GM12878 (cell line): ENCODE measurements at regions of chr7 and their contacts with region 1.

Region 1: DNA sequence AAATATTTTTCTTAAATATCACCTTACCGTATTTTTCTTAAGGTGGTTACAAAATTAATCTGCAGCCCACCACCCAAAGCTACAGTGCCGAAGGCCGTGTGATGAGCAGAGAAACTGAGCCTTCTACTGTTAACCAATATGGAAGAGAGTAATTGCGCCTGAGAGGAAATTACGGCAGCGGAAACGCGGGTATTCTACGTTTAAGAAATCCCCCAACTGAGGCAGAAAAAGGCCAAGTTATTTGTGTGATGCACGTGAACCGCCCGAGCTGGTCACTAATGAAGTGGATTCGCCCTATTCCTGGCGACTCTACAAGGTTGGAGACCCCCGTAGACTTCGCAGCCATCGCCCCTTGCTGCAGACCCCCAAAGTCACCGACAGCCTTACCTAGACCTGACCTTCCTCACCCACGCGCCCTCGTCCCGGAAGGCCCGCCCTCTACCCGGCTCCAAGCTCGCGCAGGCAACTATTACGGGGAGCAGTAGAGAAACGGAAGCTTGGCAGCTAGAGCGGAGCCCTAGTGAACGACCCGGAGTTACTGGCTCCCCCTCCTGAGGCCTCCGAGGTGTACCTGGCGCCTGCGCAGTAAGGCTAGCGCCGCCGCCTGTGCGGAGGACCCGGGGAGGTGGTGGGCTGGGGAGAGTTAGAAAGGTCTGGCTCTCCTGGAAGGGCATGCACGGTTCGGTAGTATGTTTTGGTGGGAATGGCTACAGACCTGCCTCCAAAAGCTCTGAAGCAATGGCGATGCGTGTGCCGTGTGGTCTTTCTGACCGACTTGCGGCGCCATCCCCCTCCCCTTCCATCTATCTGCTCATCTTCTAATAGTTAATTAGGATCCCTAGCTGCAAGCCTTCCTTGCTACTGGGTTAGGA is at the start of gene MRPS33:
- DNase-seq: peak; percentile 89
- ATAC-seq: peak; percentile 97
- H3K4me3 ChIP-seq: peak within 1 kb of the TSS; percentile 86
- H3K27ac ChIP-seq: peak within 1 kb of the TSS; percentile 95
- H3K4me1 ChIP-seq: peaks cover 10% of the 10 kb centered on the region
- H3K27me3 ChIP-seq: no peaks in the 10 kb centered on the region
- CTCF ChIP-seq: peak; percentile 72 to 93 (median 80)
- EP300 ChIP-seq: no peak; a peak in 1 of 4 replicates
- POLR2A ChIP-seq: peak; percentile 99
- RAD21 ChIP-seq: no peak
- polyA plus RNA-seq, gene MRPS33: 336 to 372 TPM

Region 2: DNA sequence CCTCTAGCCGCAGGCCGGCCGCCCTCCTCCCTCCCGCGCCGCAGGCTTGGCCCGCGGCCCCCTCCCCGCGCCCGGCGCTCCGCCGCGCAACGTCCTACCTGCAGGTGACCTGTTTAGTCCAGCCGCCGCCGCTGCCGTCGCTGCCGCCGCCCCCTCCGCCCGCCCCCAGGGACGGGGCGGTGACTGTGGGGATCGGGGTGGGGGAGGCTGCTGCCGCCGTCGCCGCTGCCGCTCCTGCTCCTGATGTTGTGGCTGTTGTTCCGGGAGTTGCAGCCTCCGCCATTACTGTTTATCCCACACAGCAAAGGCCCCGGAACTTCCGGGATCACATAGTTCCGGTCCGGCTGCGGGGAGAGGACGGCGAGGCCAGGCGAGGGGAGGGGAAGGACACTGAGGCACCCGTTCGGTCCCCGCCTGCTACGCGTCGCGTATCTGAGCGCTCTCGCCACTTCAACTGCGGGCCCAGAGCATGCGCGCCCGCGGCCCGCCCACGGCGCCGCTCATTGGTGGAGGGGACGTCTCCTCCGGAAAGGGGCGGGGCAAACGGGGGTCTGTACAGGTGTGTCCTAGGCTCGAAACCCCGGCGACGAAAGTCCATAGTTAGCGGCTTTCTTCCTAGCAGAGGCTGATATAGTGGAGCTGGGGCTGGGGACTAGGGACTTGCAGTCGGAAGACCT is 535.6 kb before region 1 on chr7 and contains the start of gene MKRN1:
- CTCF ChIA-PET with region 1: interaction called, 5 read pairs
- POLR2A ChIA-PET with region 1: interaction called, 3 read pairs
- RAD21 ChIA-PET with region 1: interaction called, 3 read pairs
- SMC1A ChIA-PET with region 1: interaction called, 3 read pairs
- in situ Hi-C with region 1: no loop called
- intact Hi-C with region 1: loop called (anchors 5 kb)
- DNase-seq: peak; percentile 83
- ATAC-seq: peak; percentile 96
- H3K4me3 ChIP-seq: peak within 1 kb of the TSS; percentile 98
- H3K27ac ChIP-seq: peak within 1 kb of the TSS; percentile 76
- H3K4me1 ChIP-seq: peaks cover 13% of the 10 kb centered on the region
- H3K27me3 ChIP-seq: no peaks in the 10 kb centered on the region; a peak in 1 of 4 replicates
- CTCF ChIP-seq: no peak
- EP300 ChIP-seq: no peak
- POLR2A ChIP-seq: peak; percentile 85
- RAD21 ChIP-seq: no peak
- polyA plus RNA-seq, gene MKRN1: 19.1 to 23.8 TPM

Region 3: GRCh38 chr7:140673063-140673773 is 341.5 kb before region 1 on chr7:
- CTCF ChIA-PET with region 1: interaction called, 88 read pairs
- POLR2A ChIA-PET with region 1: interaction called, 5 read pairs
- RAD21 ChIA-PET with region 1: interaction called, 23 read pairs
- SMC1A ChIA-PET with region 1: interaction called, 57 read pairs
- in situ Hi-C with region 1: loop called (anchors 10 kb)
- intact Hi-C with region 1: loop called (anchors 1 kb)
- DNase-seq: no peak
- ATAC-seq: peak; percentile 62
- H3K4me3 ChIP-seq: peak overlapping the region; percentile 82
- H3K27ac ChIP-seq: peak overlapping the region; percentile 65
- H3K4me1 ChIP-seq: peaks cover 39% of the 10 kb centered on the region
- H3K27me3 ChIP-seq: no peaks in the 10 kb centered on the region
- CTCF ChIP-seq: 0 out of 6 replicates have a peak, but pooled peaks of 1 of the 3 experiments have one; percentile 2
- EP300 ChIP-seq: no peak
- POLR2A ChIP-seq: peak; percentile 31; the same call in 1 of the 2 replicates
- RAD21 ChIP-seq: no peak

Region 4: DNA sequence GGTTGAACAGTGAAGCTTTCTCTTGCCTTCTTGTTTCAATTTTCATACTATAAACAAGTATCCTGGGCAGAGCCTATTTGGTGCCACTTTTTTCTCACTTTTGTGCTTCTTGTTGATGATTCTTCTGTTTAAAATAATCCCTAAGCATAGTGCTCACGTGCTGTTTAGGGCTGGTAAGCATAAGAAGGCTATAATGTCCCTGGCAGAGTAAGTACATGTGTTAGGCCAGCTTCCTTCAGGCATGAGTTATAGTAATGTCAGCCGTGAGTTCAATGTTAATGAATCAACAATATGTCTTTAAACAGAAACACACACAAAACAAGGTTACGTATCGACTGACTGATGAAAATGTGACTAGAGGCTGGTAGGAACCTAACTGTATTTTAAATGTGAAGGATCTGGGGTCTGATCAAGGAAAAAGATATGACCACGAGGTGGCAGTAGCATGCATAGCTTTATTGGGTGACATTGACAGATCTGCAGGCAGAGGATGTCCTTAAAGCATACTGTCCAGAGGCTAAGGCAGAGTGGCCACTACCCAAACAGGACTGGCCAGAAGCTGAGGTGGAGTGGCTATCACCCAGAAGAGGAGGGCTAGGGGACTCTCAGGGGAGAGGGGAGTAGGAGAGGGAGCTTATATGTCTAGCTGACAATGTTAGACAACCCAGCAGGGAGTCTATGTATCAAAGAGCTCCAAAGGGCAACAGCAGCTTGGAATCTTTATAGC is 203.8 kb before region 1 on chr7:
- CTCF ChIA-PET with region 1: interaction called, 166 read pairs
- POLR2A ChIA-PET with region 1: no interaction called
- RAD21 ChIA-PET with region 1: interaction called, 88 read pairs
- SMC1A ChIA-PET with region 1: interaction called, 134 read pairs
- in situ Hi-C with region 1: loop called (anchors 5 kb)
- intact Hi-C with region 1: loop called (anchors 1 kb)
- DNase-seq: peak; percentile 51
- ATAC-seq: peak; percentile 100
- H3K4me3 ChIP-seq: no peak overlapping the region
- H3K27ac ChIP-seq: no peak overlapping the region
- H3K4me1 ChIP-seq: no peaks in the 10 kb centered on the region
- H3K27me3 ChIP-seq: no peaks in the 10 kb centered on the region
- CTCF ChIP-seq: peak; percentile 55 to 72 (median 70); a peak in 5 of 6 replicates
- EP300 ChIP-seq: no peak
- POLR2A ChIP-seq: no peak
- RAD21 ChIP-seq: peak; percentile 74

Region 5: GRCh38 chr7:141079219-141079618 is 64.5 kb after region 1 on chr7:
- CTCF ChIA-PET with region 1: no interaction called
- POLR2A ChIA-PET with region 1: no interaction called
- RAD21 ChIA-PET with region 1: no interaction called
- SMC1A ChIA-PET with region 1: no interaction called
- in situ Hi-C with region 1: no loop called
- intact Hi-C with region 1: no loop called
- DNase-seq: no peak
- ATAC-seq: no peak
- H3K4me3 ChIP-seq: no peak overlapping the region
- H3K27ac ChIP-seq: no peak overlapping the region
- H3K4me1 ChIP-seq: no peaks in the 10 kb centered on the region
- H3K27me3 ChIP-seq: peaks cover under 1 to 6% of the 10 kb centered on the region in 2 experiments; a peak in 2 of 4 replicates
- CTCF ChIP-seq: no peak
- EP300 ChIP-seq: no peak
- POLR2A ChIP-seq: no peak
- RAD21 ChIP-seq: no peak

Region 6: GRCh38 chr7:141178486-141179135 is 163.9 kb after region 1 on chr7:
- CTCF ChIA-PET with region 1: no interaction called
- POLR2A ChIA-PET with region 1: no interaction called
- RAD21 ChIA-PET with region 1: no interaction called
- SMC1A ChIA-PET with region 1: no interaction called
- in situ Hi-C with region 1: no loop called
- intact Hi-C with region 1: loop called (anchors 5 kb)
- DNase-seq: no peak
- ATAC-seq: no peak
- H3K4me3 ChIP-seq: no peak overlapping the region
- H3K27ac ChIP-seq: no peak overlapping the region
- H3K4me1 ChIP-seq: no peaks in the 10 kb centered on the region
- H3K27me3 ChIP-seq: no peaks in the 10 kb centered on the region
- CTCF ChIP-seq: no peak
- EP300 ChIP-seq: no peak
- POLR2A ChIP-seq: no peak
- RAD21 ChIP-seq: no peak

Region 7: DNA sequence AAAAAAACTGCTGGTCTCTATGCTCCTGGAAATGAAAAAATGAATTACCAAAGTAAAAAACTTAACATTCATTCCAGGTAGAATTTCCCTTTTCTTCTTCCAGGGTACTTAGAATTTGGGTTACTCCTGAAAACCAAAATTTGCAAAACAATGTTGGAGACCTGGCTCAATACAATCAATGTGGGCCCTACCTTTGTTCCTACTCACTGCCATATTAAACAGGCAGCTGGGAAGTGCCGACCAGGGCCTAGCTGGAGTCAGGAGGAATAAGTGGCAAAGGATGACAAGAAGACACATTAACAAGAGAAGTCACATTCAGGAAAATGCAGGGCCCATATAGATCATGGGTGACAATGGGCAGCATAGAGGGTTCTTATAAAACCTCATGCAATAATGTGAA is 530.1 kb after region 1 on chr7:
- CTCF ChIA-PET with region 1: no interaction called
- POLR2A ChIA-PET with region 1: no interaction called
- RAD21 ChIA-PET with region 1: no interaction called
- SMC1A ChIA-PET with region 1: no interaction called
- in situ Hi-C with region 1: loop called (anchors 5 kb)
- intact Hi-C with region 1: no loop called
- DNase-seq: no peak
- ATAC-seq: no peak
- H3K4me3 ChIP-seq: no peak overlapping the region
- H3K27ac ChIP-seq: no peak overlapping the region
- H3K4me1 ChIP-seq: no peaks in the 10 kb centered on the region
- H3K27me3 ChIP-seq: no peaks in the 10 kb centered on the region
- CTCF ChIP-seq: no peak
- EP300 ChIP-seq: no peak
- POLR2A ChIP-seq: no peak
- RAD21 ChIP-seq: no peak